ENCODE measurements at regions of chr9 and their contacts with region 1.

Region 1: DNA sequence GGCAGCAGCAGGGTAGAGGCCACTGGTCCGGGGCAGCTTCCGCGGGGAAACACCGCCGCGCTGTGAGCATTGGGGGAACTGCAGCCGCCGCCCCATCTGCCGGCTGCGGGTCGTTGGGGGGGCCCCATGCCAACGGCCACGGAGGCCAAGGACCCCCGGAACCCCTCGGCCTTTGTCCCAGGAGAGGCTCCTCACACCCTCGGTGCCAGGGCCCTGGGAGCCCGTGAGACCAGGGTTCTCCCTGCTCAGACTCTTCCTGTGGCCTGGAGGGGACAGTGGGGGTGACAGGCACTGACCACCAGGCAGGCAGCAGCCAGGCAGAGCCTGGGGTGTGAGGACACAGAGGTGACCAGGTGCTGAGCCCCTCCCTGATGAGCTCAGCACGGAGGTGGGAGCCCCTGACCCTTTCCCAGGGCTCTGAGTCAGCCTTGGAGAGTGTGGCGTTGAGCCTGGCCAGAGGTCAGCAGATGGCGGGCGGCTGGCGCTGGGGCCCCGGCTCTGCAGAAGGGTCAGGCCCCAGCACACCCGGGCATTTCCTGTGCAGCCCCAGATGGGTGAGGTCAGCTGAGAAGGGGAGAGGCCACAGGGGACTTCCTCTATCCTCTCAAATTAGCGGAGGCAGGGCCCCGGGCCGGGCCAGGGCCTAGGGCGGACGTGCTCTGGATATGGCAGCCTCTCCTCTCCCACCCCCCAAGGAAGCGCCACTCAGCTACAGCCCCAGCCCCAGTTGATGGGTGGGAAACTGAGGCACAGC is 17.9 kb upstream of the EGFL7 start:
- DNase-seq: peak; percentile 86 to 98 (median 91)
- ATAC-seq: peak; percentile 65 to 73
- H3K4me3 ChIP-seq: peak overlapping the region; percentile 6
- H3K27ac ChIP-seq: peak overlapping the region; percentile 50
- H3K4me1 ChIP-seq: no peaks in the 10 kb centered on the region
- H3K27me3 ChIP-seq: no peaks in the 10 kb centered on the region

Region 2: GRCh38 chr9:136694236-136694942 is 49.6 kb after region 1 on chr9:
- intact Hi-C with region 1: loop called in 1 of 4 experiments (anchors 5 kb)
- DNase-seq: peak; percentile 69 to 89 (median 85)
- ATAC-seq: peak; percentile 49 to 61
- H3K4me3 ChIP-seq: no peak overlapping the region
- H3K27ac ChIP-seq: no peak overlapping the region
- H3K4me1 ChIP-seq: no peaks in the 10 kb centered on the region
- H3K27me3 ChIP-seq: no peaks in the 10 kb centered on the region

Region 3: DNA sequence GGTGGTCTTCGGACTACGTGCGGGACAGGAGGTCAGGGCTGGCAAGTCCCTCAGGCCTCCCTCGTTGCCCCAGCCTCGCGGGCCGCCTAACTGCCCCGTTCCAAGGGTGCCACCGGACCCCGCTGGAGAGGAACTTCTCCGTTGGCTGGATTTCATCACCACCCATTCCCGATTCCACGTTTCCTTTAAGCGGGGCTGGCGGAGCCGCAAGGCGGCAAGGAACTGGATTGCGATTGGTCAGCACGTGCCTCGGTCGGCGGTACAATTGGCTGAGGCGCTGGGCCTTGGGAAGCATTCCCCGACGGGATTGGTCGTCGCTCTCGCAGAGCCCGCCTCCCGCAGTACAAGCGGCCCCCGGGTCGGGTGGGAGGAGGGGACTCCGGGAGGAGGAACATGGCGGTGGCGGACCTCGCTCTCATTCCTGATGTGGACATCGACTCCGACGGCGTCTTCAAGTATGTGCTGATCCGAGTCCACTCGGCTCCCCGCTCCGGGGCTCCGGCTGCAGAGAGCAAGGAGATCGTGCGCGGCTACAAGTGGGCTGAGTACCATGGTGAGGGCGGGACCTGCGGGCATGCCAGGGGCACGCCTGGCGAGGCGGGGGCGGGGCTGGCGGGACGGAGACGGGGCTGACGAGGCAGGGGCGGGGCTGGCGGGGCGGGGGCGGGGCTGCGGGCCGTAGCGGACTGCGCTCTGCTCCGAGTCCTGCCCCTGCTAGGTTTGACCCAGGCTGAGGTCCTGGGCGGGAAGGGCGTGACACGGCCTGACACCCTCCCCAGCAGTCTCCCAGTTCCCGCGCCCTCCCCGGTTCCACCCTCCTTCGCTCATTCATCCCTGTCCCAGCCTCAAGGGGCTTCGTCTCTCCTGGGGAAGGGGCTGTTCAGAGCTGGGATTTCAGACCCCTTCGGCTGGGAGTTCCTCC is 204.5 kb after region 1 on chr9 and contains the start of gene PHPT1:
- intact Hi-C with region 1: no loop called
- DNase-seq: peak; percentile 99 to 100 (median 99)
- ATAC-seq: peak; percentile 89
- H3K4me3 ChIP-seq: peak within 1 kb of the TSS; percentile 70
- H3K27ac ChIP-seq: peak within 1 kb of the TSS; percentile 93
- H3K4me1 ChIP-seq: peaks cover 2% of the 10 kb centered on the region
- H3K27me3 ChIP-seq: no peaks in the 10 kb centered on the region
- total RNA-seq, gene PHPT1: 176 to 227 (median 203) TPM

Measured in right cardiac atrium (tissue), 5 donors.